Activated naive CD4-positive, alpha-beta T cell treated with anti-CD3 and anti-CD28 coated beads for 36 hours (primary cell): ENCODE measurements at regions of chr1 and their contacts with region 1.

Region 1: DNA sequence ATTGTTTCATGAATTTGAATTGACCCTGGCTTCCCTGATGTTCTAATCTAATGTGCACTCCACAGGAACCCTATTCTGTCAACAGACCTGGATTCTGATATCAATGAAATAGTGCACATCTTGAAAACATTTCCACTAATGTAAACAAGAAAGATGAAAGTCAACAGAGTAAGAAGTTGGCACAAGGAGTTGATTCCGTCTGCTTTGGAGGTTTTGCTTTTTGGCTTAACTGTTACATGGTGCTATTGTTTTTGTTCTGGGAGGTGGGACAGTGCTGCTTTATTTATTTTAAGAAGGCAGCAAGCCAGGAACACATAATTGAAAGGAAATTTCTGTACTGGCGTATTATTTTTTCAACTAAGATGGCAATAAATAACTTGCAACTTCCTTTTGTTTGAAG is 73.3 kb downstream of the LEPR start:
- DNase-seq: no peak
- H3K4me3 Mint-ChIP-seq: no peak overlapping the region
- H3K27ac Mint-ChIP-seq: no peak overlapping the region
- H3K4me1 Mint-ChIP-seq: no peaks in the 10 kb centered on the region
- H3K27me3 Mint-ChIP-seq: no peaks in the 10 kb centered on the region

Region 2: DNA sequence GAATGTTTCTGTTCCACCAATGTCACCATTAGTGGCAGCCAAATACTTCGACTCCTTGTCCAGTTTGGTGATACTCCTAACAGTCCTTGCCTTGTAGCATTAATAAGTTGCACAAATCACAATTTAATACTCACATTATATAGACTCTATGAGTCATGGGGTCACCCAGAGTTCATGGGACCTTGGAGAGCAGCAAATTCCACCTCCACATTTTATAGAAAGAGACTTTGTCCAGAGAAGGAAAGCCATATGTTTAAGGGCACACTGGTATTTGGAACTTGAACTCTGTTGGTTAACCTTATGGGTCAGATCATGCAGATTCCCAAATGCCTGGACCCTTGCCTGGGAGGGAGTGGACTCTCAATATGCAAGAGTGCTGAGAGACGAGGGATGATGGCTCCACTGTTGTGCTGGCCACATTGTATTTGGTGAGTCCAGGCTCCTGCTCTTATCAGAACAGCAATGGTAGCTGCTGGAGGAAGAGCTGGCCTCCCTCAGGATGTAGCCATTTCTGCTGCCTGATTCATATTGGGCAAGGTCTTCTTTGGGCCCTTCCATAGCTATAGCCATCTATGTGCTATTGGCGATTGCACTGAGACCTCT is 153.8 kb before region 1 on chr1:
- CTCF ChIA-PET with region 1: no interaction called
- intact Hi-C with region 1: no loop called
- DNase-seq: peak; percentile 6
- H3K4me3 Mint-ChIP-seq: no peak overlapping the region
- H3K27ac Mint-ChIP-seq: no peak overlapping the region
- H3K4me1 Mint-ChIP-seq: no peaks in the 10 kb centered on the region
- H3K27me3 Mint-ChIP-seq: no peaks in the 10 kb centered on the region

Region 3: GRCh38 chr1:65605621-65606020 is 111.8 kb after region 1 on chr1:
- CTCF ChIA-PET with region 1: no interaction called
- intact Hi-C with region 1: loop called (anchors 10 kb)
- DNase-seq: no peak
- H3K4me3 Mint-ChIP-seq: no peak overlapping the region
- H3K27ac Mint-ChIP-seq: no peak overlapping the region
- H3K4me1 Mint-ChIP-seq: no peaks in the 10 kb centered on the region
- H3K27me3 Mint-ChIP-seq: no peaks in the 10 kb centered on the region